Motor neuron (in vitro differentiated cells): ENCODE measurements at regions of chr1 and their contacts with region 1.

Region 1: DNA sequence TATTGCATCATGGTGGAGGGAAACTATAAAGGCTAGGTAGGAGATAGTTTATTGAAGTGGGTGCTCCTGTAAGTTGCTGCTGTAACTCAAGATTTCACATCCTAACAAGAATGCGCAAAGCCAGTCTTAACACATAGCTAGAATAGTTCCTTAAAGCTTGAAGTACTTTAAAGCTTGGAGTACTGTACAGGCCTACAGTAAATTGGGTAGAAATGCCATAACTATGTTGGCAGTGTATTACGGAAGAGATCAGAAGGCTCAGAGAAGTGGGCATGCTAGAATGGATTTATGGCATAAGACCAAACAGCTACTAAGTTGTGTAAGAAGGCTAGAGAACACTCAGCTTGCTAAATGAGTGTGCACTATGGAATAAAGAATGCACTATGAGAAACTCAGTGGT is 44.5 kb downstream of the DMRTA2 start:
- ATAC-seq: no peak
- H3K4me3 ChIP-seq: no peak overlapping the region
- H3K27ac ChIP-seq: no peak overlapping the region
- H3K4me1 ChIP-seq: no peaks in the 10 kb centered on the region

Region 2: GRCh38 chr1:50735443-50735842 is 356.7 kb after region 1 on chr1:
- in situ Hi-C with region 1: loop called in 2 of 9 experiments (anchors 25 kb)
- ATAC-seq: no peak
- H3K4me3 ChIP-seq: no peak overlapping the region
- H3K27ac ChIP-seq: no peak overlapping the region
- H3K4me1 ChIP-seq: no peaks in the 10 kb centered on the region

Region 3: GRCh38 chr1:51058858-51059257 is 680.1 kb after region 1 on chr1:
- in situ Hi-C with region 1: loop called in 1 of 9 experiments (anchors 25 kb)
- ATAC-seq: peak in 3 of 8 experiments; percentile 93 to 96 (median 96)
- H3K4me3 ChIP-seq: no peak overlapping the region
- H3K27ac ChIP-seq: no peak overlapping the region
- H3K4me1 ChIP-seq: no peaks in the 10 kb centered on the region